ENCODE measurements at regions of chr14 and their contacts with region 1.

Region 1: DNA sequence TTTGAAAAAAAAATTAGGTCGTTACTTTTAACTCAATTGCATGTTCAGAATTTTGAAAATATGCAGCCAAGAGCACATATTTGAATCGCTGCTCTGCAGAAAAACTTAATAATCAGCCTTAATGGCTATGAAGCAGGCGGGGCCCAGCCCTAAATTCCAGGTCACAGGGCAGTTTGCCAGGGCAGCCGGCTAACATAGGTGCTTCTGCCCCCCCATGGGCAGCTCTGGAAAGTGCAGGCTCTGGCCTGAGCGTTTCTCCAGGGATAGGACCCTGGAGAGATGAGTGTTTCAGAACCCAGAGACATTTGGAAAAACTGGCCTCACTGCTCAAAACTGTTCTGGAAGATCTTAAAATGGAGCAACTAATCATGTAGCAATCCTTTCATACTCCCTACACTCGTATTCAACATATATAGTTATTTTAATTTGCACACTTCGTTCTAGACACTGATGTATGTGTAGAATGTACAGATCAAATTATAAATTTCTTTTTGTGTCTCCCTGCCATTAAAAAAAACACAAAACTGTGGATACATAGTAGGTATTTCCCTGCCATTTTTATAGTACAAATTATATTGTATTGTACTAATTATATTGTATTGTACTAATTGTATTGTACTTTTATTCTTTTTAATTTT is 26.0 kb upstream of the PTGR2 start:
- DNase-seq: peak; percentile 55 to 96 (median 80)

Region 2: DNA sequence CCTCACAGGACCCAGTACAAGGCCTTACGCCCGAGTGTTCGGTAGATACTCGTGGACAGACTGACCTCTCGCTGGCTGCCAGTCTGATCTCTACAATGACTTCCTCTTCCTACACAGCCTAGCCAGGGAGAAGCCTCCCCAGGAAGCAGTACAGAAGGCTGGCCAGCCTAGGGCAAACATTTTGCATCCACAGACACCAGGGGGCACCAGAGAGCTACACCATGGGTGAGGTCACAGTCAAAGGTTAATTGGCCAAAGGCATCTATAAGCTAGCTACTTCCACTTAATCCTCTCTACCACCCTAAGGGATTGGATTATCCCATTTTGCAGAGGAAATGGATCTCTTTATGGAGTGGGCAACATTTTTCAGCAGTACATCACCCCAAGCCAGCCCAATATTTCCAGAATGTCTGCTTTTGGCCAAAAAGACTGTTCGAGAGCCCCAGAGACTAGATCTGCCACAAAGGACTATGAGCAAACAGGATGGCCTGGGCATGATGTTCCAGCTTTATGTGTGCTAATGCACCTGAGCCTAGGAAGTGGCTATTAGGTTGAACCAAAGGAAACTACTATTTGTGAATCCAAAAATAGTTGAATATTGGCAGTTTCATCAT is 96.8 kb before region 1 on chr14:
- intact Hi-C with region 1: loop called (anchors 1 kb)
- DNase-seq: peak in 9 of 10 donors; percentile 64 to 96 (median 90)

Region 3: DNA sequence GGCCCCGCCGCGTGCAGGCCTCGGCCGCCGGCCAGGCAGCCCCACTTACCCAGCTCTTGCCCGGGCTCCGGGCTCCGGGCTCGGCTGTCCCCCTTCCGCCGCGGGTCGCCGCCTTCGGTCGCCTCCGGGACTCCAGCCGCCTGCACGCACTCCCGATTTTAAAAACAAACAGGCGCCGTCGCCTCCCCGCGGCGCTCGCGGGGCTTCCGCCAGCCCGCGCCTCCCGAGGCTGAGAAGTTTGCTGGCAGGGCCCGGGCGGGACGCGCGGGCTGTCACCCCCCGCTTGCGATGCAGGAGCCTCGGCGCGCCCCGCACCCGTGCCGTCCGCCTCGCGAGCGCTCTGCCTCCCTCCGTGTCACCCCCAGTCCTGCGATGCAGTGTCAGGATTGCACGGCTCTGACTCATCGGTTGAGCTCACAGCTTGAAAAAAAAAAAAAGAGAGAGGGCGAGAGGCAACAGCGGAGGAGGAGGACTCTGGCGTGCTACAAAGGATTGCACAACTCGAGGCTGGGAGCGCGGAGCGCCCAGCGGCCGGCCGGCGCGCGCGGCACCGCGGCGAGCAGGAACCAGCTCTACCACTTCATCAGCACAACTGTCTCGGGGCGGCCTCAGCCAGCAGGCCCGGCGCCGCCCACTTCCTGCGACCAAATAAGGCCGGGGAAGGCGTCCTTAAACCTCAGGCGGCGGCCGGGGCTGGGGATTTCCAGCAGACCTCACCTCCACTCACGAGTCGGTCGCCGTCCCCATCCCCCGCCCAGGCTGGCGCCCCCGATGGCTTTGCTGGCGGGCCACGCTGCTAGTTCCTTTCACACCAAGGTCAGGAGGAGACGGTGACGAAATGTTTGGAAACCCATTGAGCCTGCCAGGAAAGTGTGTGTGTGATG is 65.7 kb before region 1 on chr14:
- intact Hi-C with region 1: loop called (anchors 10 kb)
- DNase-seq: peak; percentile 81 to 99 (median 90)

Region 4: GRCh38 chr14:73802431-73803188 is 23.1 kb before region 1 on chr14:
- intact Hi-C with region 1: no loop called
- DNase-seq: peak in 1 of 10 donors; percentile 56